ENCODE measurements at regions of chr14 and their contacts with region 1.

Region 1: DNA sequence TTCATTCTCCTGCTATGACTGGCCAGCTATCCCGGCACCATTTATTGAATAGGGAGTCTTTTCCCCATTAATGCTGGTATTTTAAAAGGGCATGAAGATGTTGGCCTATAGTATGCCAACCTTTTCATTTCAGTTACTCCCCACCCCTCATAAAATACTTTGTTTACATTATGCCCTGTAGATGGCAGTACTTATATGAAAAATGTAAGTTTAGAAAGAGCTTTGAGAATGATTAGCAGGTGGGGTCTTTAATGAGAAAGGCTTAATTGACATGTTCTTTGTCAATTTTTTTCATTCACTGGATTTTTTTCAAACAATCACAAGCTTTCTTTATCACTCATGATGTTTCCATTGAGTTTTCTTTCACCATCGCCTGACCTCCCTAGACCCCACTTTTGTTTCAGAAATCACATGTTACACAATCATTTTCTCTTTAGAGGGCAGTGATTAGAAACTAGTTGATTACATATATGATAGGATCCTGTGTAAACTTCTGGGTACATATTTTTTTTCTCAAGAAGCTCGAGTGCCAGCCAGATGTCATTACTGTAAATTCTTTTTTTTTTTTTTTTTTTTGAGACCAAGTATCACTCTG is 62.6 kb upstream of the PSMA6 start:
- DNase-seq: no peak
- H3K4me3 Mint-ChIP-seq: no peak overlapping the region
- H3K27ac Mint-ChIP-seq: peak overlapping the region; percentile 26
- H3K4me1 Mint-ChIP-seq: peaks cover 23% of the 10 kb centered on the region
- H3K27me3 Mint-ChIP-seq: no peaks in the 10 kb centered on the region

Region 2: DNA sequence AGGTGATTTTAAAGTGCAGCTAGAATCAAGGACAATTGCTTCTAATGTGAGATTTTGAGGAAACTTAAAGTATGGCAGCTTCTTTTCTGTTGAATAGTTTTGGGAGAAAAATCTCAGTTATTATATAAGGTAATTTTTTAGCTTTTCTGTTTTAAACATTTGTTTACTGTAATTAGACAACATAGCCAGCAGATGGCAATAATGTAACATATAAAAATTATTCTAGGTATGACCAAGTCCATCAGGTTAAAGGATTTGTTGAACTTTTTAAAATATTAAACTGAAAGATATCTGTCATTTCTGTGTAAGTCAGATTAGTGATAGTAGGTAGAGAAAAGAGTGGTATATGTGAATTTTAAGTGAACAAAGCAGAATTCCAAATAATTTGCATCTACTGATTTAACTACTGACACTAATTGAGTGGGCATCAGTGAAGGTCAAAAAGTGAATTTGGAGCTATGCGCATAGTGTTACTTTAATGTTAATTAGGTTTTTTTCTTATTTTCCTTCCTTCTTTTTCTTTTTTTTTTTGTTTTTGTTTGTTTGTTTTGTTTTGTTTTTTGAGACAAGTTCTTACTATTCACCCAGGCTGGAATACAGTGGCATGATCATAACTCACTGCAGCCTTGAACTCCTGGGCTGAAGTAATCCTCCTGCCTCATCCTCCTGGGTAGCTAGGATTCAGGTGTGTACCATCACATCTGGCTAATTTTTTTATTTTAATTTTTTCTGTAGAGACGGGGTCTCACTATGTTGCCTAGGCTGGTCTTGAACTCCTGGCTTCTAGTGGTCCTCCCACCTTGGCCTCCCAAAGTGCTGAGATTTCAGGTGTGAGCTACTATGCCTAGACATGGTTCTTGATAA is 88.6 kb before region 1 on chr14:
- CTCF ChIA-PET with region 1: interaction called, 3 read pairs
- POLR2A ChIA-PET with region 1: no interaction called
- intact Hi-C with region 1: loop called (anchors 5 kb)
- DNase-seq: no peak
- H3K4me3 Mint-ChIP-seq: no peak overlapping the region
- H3K27ac Mint-ChIP-seq: no peak overlapping the region
- H3K4me1 Mint-ChIP-seq: peaks cover 17% of the 10 kb centered on the region
- H3K27me3 Mint-ChIP-seq: no peaks in the 10 kb centered on the region

Region 3: GRCh38 chr14:35167496-35167895 is 62.1 kb before region 1 on chr14:
- CTCF ChIA-PET with region 1: no interaction called
- POLR2A ChIA-PET with region 1: no interaction called
- intact Hi-C with region 1: no loop called
- DNase-seq: no peak
- H3K4me3 Mint-ChIP-seq: no peak overlapping the region
- H3K27ac Mint-ChIP-seq: no peak overlapping the region
- H3K4me1 Mint-ChIP-seq: peaks cover 10% of the 10 kb centered on the region
- H3K27me3 Mint-ChIP-seq: no peaks in the 10 kb centered on the region

Region 4: GRCh38 chr14:35180179-35180578 is 49.4 kb before region 1 on chr14:
- CTCF ChIA-PET with region 1: no interaction called
- POLR2A ChIA-PET with region 1: no interaction called
- intact Hi-C with region 1: no loop called
- DNase-seq: no peak
- H3K4me3 Mint-ChIP-seq: no peak overlapping the region
- H3K27ac Mint-ChIP-seq: no peak overlapping the region
- H3K4me1 Mint-ChIP-seq: peaks cover 6% of the 10 kb centered on the region
- H3K27me3 Mint-ChIP-seq: no peaks in the 10 kb centered on the region

Region 5: GRCh38 chr14:35215110-35215876 is 14.3 kb before region 1 on chr14:
- CTCF ChIA-PET with region 1: interaction called, 12 read pairs
- POLR2A ChIA-PET with region 1: no interaction called
- intact Hi-C with region 1: no loop called
- DNase-seq: no peak
- H3K4me3 Mint-ChIP-seq: no peak overlapping the region
- H3K27ac Mint-ChIP-seq: no peak overlapping the region
- H3K4me1 Mint-ChIP-seq: peaks cover 20% of the 10 kb centered on the region
- H3K27me3 Mint-ChIP-seq: no peaks in the 10 kb centered on the region

Region 6: GRCh38 chr14:35243956-35244355 is 14.4 kb after region 1 on chr14:
- CTCF ChIA-PET with region 1: interaction called, 7 read pairs
- POLR2A ChIA-PET with region 1: no interaction called
- intact Hi-C with region 1: loop called (anchors 2 kb)
- DNase-seq: no peak
- H3K4me3 Mint-ChIP-seq: no peak overlapping the region
- H3K27ac Mint-ChIP-seq: no peak overlapping the region
- H3K4me1 Mint-ChIP-seq: peaks cover 6% of the 10 kb centered on the region
- H3K27me3 Mint-ChIP-seq: no peaks in the 10 kb centered on the region

Measured in activated CD4-positive, alpha-beta memory T cell treated with anti-CD3 and anti-CD28 coated beads for 36 hours (primary cell).